Mucosa of descending colon (tissue), 3 donors: ENCODE measurements at regions of chrX and their contacts with region 1.

Region 1: DNA sequence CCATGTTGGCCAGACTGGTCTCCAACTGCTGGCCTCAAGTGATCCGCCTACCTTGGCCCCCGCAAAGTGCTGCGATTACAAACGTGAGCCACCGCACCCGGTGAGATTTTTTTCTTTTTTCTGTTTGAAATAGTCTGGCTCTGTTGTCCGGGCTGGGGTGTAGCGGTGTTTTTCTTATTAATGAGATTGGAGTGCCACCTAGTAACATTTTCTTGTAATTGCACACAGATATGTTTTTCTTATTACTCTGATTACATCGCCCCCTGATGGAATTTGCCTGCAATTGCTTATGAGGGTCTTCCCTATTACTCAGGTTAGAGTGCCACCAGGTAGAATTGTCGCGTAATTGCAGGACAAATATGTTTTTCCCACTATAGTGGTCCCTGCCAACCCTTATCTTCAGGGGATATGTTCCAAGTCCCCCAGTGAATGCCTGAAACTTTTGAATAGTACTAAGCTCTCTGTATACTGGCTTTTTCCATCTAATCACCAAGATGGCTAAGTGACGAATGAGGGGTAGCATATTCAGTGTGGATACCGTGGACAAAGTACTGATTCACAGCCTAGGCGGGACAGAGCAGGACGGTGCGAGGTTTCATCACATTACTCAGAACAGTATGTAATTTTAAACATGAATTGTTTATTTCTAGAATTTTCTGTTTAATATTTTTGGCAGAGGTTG is 8.6 kb upstream of the PDHA1 start:
- DNase-seq: no peak
- ATAC-seq: peak; percentile 40
- H3K4me3 ChIP-seq: no peak overlapping the region
- H3K4me1 ChIP-seq: no peaks in the 10 kb centered on the region
- CTCF ChIP-seq: no peak

Region 2: GRCh38 chrX:18389968-18390367 is 945.1 kb before region 1 on chrX:
- intact Hi-C with region 1: loop called in 1 of 2 experiments (anchors 10 kb)
- DNase-seq: no peak
- ATAC-seq: no peak
- H3K4me3 ChIP-seq: no peak overlapping the region
- H3K4me1 ChIP-seq: no peaks in the 10 kb centered on the region
- CTCF ChIP-seq: no peak